ENCODE measurements at regions of chr2 and their contacts with region 1.

Region 1: DNA sequence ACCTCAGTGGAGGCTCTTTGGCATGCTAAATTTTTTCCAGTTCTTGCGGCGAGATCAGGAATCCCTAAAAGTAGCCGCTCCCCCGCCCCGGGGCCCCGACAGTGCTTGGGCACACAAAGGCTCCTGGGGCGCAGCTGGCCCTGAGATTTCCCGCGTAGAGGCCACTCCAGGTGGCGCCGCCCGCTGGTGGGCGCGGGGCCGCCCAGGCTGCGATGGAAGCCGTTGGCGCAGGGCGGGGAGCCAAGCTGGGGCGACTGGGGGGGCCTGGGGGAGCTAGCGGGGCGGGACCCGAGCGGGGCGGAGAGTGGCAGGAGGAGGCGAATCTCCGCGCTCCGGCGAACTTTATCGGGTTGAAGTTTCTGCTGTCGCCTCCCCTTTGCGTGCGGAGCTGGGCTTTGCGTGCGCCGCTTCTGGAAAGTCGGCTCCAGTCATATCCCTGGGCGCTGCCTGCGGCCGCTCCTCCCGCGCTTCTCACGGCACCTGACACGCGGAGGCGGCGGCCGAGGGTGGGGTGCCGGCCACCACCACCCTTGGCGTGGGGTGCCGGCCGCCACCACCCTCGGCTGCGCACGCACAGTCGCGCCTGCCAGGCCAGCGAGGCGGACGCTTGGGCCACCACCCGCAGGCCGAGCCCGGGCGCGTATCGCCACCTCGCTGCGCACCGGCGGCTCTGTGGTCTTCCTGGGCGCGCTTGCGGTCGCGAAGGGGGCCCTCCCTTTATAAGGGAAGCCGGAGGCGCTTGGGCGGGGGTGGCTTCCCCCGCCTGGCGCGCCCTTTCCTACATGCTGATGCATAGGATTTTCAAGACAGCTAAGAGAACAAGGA is 867 bp upstream of the CYP1B1 start:
- DNase-seq: peak; percentile 75
- ATAC-seq: peak; percentile 13
- H3K4me3 Mint-ChIP-seq: peak overlapping the region; percentile 73
- H3K27ac Mint-ChIP-seq: no peak overlapping the region
- H3K4me1 Mint-ChIP-seq: peaks cover 73% of the 10 kb centered on the region
- H3K27me3 Mint-ChIP-seq: peaks cover 69% of the 10 kb centered on the region
- CTCF ChIP-seq: no peak

Region 2: DNA sequence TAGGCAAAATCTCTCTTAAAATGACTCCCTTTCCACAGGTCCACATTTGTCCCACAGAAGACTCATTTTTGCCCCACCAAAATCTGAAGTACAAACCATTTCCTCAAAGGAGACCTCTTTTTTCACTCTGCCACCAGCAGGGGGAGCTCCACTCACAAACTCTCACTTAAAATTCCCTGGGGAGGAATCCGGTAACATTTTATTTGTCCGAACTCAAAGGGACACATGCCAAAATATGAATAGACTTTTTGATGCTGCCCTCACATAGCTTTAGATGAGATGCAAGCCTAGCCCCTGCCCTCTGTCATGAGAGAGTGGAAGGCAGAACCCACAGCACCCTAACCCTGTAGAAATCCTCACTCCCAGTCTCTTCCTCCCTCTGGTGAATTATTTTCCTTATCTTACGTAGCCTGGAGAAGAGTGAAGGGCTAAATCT is 94.7 kb before region 1 on chr2:
- CTCF ChIA-PET with region 1: interaction called, 10 read pairs
- POLR2A ChIA-PET with region 1: no interaction called
- DNase-seq: peak; percentile 69
- ATAC-seq: peak; percentile 72
- H3K4me3 Mint-ChIP-seq: peak overlapping the region; percentile 51
- H3K27ac Mint-ChIP-seq: no peak overlapping the region
- H3K4me1 Mint-ChIP-seq: peaks cover 12% of the 10 kb centered on the region
- H3K27me3 Mint-ChIP-seq: no peaks in the 10 kb centered on the region
- CTCF ChIP-seq: peak; percentile 77

Region 3: GRCh38 chr2:38095996-38096861 is 19.4 kb after region 1 on chr2:
- CTCF ChIA-PET with region 1: interaction called, 49 read pairs
- POLR2A ChIA-PET with region 1: interaction called, 4 read pairs
- DNase-seq: no peak
- ATAC-seq: peak; percentile 11; the same call in 1 of the 2 replicates
- H3K4me3 Mint-ChIP-seq: no peak overlapping the region
- H3K27ac Mint-ChIP-seq: no peak overlapping the region
- H3K4me1 Mint-ChIP-seq: peaks cover 86% of the 10 kb centered on the region
- H3K27me3 Mint-ChIP-seq: peaks cover 88% of the 10 kb centered on the region
- CTCF ChIP-seq: no peak

Region 4: DNA sequence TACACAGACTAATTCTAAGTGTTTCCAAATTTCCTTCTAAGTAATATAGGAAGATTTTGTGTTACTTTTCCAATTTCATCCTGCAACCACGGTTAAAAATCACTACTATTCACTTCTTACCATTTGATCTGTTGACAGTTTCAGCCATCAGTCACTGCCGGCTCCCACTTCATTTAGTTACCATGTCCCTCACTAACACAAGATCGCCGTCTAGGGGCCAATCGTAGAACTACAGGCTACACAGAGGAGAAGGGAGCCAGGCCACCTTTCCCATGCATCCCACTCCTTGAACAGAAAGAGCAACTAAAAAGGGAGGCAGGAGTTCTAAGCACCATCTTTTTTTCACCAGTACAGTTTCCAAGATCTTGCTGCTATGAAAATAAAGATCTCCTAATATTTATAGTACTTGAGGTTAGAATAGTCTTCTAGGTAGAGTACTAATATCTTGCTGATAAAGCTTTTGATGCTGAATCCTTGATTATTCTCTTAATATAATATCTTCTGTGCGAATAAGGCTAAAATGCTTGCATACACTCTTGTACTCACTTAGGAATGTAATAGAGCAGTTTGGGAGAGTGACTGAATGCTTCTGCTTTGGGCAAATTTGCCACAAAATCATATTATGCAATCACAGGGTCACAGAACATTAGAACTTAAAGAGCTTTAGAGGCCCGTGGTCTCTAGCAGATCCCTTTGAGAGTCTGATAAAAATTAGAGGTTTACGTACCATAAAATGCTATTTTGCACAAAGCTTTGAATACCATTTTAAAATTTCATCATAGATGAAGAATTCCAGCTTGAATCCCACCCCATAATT is 38.6 kb after region 1 on chr2:
- CTCF ChIA-PET with region 1: interaction called, 22 read pairs
- POLR2A ChIA-PET with region 1: interaction called, 4 read pairs
- DNase-seq: peak; percentile 95
- ATAC-seq: peak; percentile 94
- H3K4me3 Mint-ChIP-seq: no peak overlapping the region
- H3K27ac Mint-ChIP-seq: no peak overlapping the region
- H3K4me1 Mint-ChIP-seq: peaks cover 3% of the 10 kb centered on the region; the same call in 1 of the 2 replicates
- H3K27me3 Mint-ChIP-seq: no peaks in the 10 kb centered on the region; the same call in 1 of the 2 replicates
- CTCF ChIP-seq: peak; percentile 98

Region 5: DNA sequence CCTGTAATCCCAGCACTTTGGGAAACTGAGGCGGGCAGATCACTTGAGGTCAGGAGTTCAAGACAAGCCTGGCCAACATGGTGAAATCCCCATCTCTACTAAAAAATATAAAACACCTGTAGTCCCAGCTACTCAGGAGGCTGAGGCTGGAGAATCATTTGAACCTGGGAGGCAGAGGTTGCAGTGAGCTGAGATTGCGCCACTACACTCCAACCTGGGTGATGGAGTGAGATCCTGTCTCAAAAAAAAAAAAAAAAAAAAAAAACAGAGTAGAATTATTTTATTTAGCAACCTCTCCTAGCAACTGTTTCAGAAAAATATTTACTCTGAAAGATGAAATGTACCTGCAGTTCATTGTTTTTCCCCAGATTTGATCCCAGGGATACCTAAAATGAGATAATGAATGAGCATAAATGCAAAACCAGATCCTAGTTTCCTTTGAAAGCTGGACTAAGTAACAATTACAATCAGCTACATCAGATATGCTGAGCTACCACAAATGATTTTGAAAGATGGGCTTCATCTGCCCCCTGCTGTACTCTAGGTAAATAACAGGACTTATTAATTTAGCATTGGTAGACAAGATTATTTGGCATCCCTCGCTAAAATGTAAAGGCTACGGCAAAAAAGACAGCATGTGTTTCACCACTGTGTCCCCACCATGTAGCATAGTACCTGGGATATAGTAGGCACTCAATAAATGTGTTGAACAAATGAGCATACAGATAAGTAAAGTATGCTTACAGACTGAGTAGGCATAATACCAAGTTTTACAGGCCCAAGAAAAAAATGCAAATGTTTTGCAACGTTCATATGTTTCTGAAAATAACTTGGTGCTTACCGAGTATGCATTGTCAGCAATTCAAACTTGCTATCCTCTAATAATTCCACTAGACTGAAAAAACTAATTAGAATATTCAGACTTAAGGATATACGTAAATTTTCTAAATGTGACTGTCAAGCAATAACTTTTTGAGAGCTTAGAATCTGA is 197.8 kb after region 1 on chr2:
- CTCF ChIA-PET with region 1: interaction called, 39 read pairs
- POLR2A ChIA-PET with region 1: no interaction called
- DNase-seq: no peak
- ATAC-seq: peak; percentile 15; the same call in 1 of the 2 replicates
- H3K4me3 Mint-ChIP-seq: no peak overlapping the region
- H3K27ac Mint-ChIP-seq: no peak overlapping the region
- H3K4me1 Mint-ChIP-seq: peaks cover 53% of the 10 kb centered on the region
- H3K27me3 Mint-ChIP-seq: peaks cover 46% of the 10 kb centered on the region
- CTCF ChIP-seq: peak; percentile 31

Measured in WTC11 (cell line).